Spleen (tissue), 13 donors: ENCODE measurements at regions of chr14 and their contacts with region 1.

Region 1: DNA sequence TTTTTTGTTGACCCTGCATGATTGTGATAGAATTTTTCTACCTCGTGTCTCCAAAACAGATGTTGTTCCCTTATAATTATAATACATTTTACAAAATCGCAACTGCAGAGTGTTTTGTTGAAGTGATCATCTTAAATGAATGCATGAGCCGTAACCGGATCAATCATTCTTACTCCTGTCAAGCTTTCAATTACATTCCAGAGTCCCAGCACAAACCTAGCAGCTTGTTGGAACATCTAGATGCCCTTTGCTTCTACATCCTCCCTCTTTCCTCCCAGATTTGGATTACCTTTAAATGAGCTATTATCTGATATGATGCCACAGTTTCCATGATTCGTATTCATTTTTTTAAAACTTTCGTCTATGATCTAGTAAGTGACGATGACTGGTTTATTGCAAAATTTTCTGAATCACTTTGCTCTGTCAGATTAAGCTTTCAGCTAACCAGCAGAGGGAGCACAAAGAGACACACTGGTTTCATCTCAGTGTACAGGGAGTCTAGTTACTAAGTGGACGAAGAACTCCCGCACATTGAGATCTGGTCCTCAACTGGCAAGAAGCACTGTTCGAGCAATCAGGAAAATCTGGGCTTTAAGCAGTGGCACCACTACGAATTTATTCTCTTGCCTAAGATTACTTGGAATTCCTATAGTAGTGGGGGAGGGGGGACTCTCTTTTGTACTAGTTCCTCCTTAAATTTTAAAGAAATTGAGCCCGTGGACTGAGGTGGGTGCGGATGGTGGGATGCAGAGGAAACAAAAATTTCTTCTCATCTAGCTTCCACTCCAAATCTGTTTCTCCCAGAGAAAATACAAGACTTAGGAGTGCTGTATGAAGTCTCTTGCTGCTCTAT is 40.9 kb downstream of the TSHR start:
- DNase-seq: no peak
- H3K4me3 ChIP-seq: no peak overlapping the region
- H3K27ac ChIP-seq: no peak overlapping the region
- H3K4me1 ChIP-seq: peaks cover 0 to 9% (median 6%) of the 10 kb centered on the region in 6 donors
- H3K27me3 ChIP-seq: peaks cover 0 to 10% (median 0%) of the 10 kb centered on the region in 7 donors
- CTCF ChIP-seq: peak; percentile 25 to 71 (median 58)
- POLR2A ChIP-seq: no peak

Region 2: GRCh38 chr14:81137316-81137715 is 141.0 kb after region 1 on chr14:
- intact Hi-C with region 1: no loop called
- DNase-seq: no peak
- H3K4me3 ChIP-seq: no peak overlapping the region
- H3K27ac ChIP-seq: no peak overlapping the region
- H3K4me1 ChIP-seq: no peaks in the 10 kb centered on the region
- H3K27me3 ChIP-seq: no peaks in the 10 kb centered on the region
- CTCF ChIP-seq: no peak
- POLR2A ChIP-seq: no peak

Region 3: GRCh38 chr14:81164167-81164774 is 168.0 kb after region 1 on chr14:
- intact Hi-C with region 1: loop called (anchors 10 kb)
- DNase-seq: no peak
- H3K4me3 ChIP-seq: no peak overlapping the region
- H3K27ac ChIP-seq: peak overlapping the region in 1 of 8 donors; percentile 30
- H3K4me1 ChIP-seq: peaks cover 0 to 16% (median 5%) of the 10 kb centered on the region in 6 donors
- H3K27me3 ChIP-seq: no peaks in the 10 kb centered on the region
- CTCF ChIP-seq: peak in 9 of 11 experiments; percentile 30 to 68 (median 54)
- POLR2A ChIP-seq: no peak